ENCODE measurements at regions of chr6 and their contacts with region 1.

Region 1: DNA sequence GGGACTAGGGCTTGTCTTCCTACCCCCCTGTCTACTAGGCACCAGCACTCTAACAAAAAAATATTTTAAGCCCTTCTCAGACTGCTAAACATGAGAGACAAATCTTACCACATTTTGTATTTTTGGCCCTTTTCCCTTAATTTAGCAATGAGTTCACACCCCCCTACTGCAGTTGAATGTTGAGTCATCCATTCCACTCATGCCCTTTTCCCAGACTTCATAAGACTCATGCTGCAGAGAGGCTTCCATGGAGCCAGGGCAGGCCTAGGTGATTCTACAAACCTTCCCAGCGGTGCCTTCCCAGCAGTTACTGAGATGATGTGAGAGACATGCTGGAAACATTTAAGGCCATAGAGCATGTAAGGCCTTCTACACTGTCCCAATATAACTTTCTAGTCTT is 53.9 kb downstream of the PXDC1 start:
- DNase-seq: no peak
- H3K4me3 ChIP-seq: no peak overlapping the region
- H3K4me3 Mint-ChIP-seq: no peak overlapping the region
- H3K27ac Mint-ChIP-seq: peak overlapping the region; percentile 60
- H3K4me1 ChIP-seq: peaks cover 24% of the 10 kb centered on the region
- H3K4me1 Mint-ChIP-seq: peaks cover 34% of the 10 kb centered on the region
- H3K27me3 ChIP-seq: no peaks in the 10 kb centered on the region
- H3K27me3 Mint-ChIP-seq: no peaks in the 10 kb centered on the region
- CTCF ChIP-seq: no peak

Region 2: DNA sequence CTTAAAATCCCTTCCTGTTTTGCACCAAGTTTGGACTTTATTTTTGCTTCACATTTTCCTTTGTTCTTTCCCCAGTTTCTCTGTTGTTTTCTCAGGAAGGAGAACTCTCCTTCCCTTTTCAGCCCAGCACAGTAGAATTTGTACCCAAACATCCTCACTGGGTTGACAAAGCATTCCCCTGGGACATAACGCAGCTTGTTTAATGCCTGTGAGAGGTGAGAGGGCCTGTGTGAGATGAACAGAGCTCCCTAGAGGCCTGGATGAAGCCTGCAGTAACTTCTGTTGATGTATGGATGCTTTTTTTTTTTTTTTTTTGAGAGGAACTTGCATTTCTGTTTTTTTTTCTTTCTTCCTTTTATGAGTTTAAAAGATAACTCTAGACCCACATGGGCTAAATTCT is 135.9 kb before region 1 on chr6:
- CTCF ChIA-PET with region 1: interaction called, 10 read pairs
- POLR2A ChIA-PET with region 1: no interaction called
- intact Hi-C with region 1: no loop called
- DNase-seq: peak in 1 of 2 experiments; percentile 34
- H3K4me3 ChIP-seq: no peak overlapping the region
- H3K4me3 Mint-ChIP-seq: no peak overlapping the region
- H3K27ac Mint-ChIP-seq: peak overlapping the region; percentile 32
- H3K4me1 ChIP-seq: peaks cover 17% of the 10 kb centered on the region
- H3K4me1 Mint-ChIP-seq: peaks cover 18% of the 10 kb centered on the region
- H3K27me3 ChIP-seq: no peaks in the 10 kb centered on the region
- H3K27me3 Mint-ChIP-seq: no peaks in the 10 kb centered on the region
- CTCF ChIP-seq: peak; percentile 27 to 39

Region 3: DNA sequence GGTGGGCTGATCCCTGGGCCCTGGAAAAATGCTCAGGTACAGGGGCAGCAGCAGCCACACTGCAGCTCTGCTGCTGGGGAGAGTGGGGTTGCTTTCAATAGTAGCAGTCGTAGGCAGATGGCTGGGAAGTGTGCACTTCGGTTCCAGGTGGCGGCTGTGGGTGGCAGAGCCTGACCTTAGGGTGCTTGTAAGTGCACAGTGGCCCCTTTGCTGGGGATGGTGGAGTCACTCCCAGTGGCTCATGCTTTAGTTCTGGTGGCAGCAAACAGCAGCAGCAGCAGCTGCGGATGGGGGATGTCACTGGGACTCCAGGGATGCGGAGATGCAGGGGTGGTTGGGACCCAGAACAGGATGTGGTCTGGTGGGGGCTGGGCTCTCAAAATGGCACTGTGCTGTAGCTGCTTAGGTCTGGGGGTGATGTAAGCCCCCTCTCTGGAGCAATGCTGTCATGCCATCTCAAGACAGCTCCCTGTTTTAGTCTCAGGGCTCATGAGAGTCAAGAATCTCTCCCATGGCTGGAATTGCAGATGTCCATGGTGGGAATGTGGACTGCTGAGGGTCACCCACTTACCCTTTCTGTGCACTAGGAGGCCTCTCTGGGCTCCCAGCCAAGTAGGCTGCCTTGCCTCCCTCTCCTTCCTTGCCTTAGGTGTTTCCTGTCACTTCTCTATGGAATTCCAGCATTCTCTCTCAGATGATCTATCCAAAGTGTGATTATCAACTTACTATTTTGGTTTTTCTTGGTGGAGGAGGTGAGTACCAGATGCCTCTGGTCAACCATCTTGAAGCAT is 94.1 kb before region 1 on chr6:
- CTCF ChIA-PET with region 1: no interaction called
- POLR2A ChIA-PET with region 1: no interaction called
- intact Hi-C with region 1: no loop called
- DNase-seq: no peak
- H3K4me3 ChIP-seq: no peak overlapping the region
- H3K4me3 Mint-ChIP-seq: no peak overlapping the region
- H3K27ac Mint-ChIP-seq: no peak overlapping the region
- H3K4me1 ChIP-seq: no peaks in the 10 kb centered on the region
- H3K4me1 Mint-ChIP-seq: no peaks in the 10 kb centered on the region
- H3K27me3 ChIP-seq: no peaks in the 10 kb centered on the region
- H3K27me3 Mint-ChIP-seq: peaks cover 2% of the 10 kb centered on the region
- CTCF ChIP-seq: no peak

Region 4: GRCh38 chr6:3650959-3651697 is 46.5 kb before region 1 on chr6:
- CTCF ChIA-PET with region 1: no interaction called
- POLR2A ChIA-PET with region 1: no interaction called
- intact Hi-C with region 1: no loop called
- DNase-seq: no peak
- H3K4me3 ChIP-seq: no peak overlapping the region
- H3K4me3 Mint-ChIP-seq: no peak overlapping the region
- H3K27ac Mint-ChIP-seq: no peak overlapping the region
- H3K4me1 ChIP-seq: no peaks in the 10 kb centered on the region
- H3K4me1 Mint-ChIP-seq: peaks cover 9% of the 10 kb centered on the region
- H3K27me3 ChIP-seq: no peaks in the 10 kb centered on the region
- H3K27me3 Mint-ChIP-seq: no peaks in the 10 kb centered on the region
- CTCF ChIP-seq: no peak

Region 5: GRCh38 chr6:4964675-4965561 is 1267.3 kb after region 1 on chr6:
- CTCF ChIA-PET with region 1: no interaction called
- POLR2A ChIA-PET with region 1: no interaction called
- intact Hi-C with region 1: no loop called
- DNase-seq: no peak
- H3K4me3 ChIP-seq: no peak overlapping the region
- H3K4me3 Mint-ChIP-seq: no peak overlapping the region
- H3K27ac Mint-ChIP-seq: no peak overlapping the region
- H3K4me1 ChIP-seq: no peaks in the 10 kb centered on the region
- H3K4me1 Mint-ChIP-seq: no peaks in the 10 kb centered on the region
- H3K27me3 ChIP-seq: no peaks in the 10 kb centered on the region
- H3K27me3 Mint-ChIP-seq: peaks cover 2% of the 10 kb centered on the region
- CTCF ChIP-seq: no peak

Measured in Caco-2 (cell line).